A549 (cell line): ENCODE measurements at regions of chr19 and their contacts with region 1.

Region 1: GRCh38 chr19:9934132-9934950 is 2.0 kb downstream of the OLFM2 start:
- DNase-seq: peak; percentile 52 to 75
- ATAC-seq: peak; percentile 38 to 76
- H3K4me3 ChIP-seq: no peak overlapping the region
- H3K27ac ChIP-seq: no peak overlapping the region
- H3K4me1 ChIP-seq: peaks cover 17% of the 10 kb centered on the region
- CTCF ChIP-seq: peak; percentile 74
- EP300 ChIP-seq: no peak
- POLR2A ChIP-seq: no peak
- RAD21 ChIP-seq: peak; percentile 75 to 89

Region 2: DNA sequence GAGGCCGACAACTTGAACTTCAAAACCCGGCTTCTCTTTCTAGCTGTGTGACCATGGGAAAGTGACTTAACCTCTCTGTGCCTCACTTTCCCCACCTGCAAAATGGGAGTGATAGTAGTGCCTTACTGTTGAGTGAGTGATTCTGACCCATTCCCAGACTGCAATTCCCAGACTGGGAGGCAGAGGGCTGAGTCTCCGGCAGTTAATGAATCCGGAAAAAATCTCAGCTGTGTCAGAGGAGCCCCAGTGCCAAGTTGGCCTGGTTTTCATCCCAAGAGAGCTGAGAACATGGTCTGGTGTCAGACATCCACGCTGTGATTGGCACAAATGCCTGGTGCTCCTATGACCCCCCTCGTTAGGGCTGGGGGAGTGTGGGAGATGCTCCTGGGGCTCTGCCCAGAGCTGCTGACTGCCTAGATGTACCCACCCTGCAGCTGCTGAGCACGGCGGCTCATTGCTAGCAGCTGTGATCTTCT is 49.2 kb before region 1 on chr19:
- CTCF ChIA-PET with region 1: no interaction called
- POLR2A ChIA-PET with region 1: no interaction called
- DNase-seq: no peak
- ATAC-seq: peak in 1 of 2 experiments; percentile 64; a peak in 3 of 6 replicates
- H3K4me3 ChIP-seq: no peak overlapping the region
- H3K27ac ChIP-seq: no peak overlapping the region
- H3K4me1 ChIP-seq: no peaks in the 10 kb centered on the region
- CTCF ChIP-seq: no peak
- EP300 ChIP-seq: no peak
- POLR2A ChIP-seq: no peak
- RAD21 ChIP-seq: no peak

Region 3: DNA sequence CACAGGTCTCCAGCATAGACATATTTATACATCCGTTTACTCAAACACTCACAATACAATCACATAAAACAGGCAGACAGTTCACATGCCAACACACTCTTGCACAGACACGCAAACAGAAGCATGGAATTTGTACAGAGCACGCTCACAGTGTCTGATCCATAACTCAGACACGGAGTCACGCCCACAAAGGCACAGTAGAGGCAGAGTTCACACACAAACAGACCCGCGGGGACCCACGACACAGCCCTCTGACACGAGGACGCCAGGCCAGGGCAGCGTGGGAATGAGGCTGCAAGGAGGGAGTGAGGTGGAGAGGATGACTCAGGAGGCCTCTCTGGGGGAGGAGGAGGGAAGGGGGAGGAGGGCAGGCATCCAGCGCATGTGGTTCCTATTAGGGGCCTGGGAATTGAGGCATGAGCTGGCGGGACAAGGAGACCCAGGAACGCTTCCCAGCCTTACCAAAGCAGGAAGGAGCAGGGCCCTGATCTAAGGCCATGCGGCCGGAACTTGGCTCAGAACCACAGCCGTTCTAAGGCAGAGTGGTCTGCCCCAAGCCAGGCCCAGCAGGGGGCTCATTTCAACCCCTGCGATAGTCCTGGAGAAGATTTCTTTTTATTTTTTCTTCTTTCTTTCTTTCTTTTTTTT is 11.1 kb after region 1 on chr19:
- CTCF ChIA-PET with region 1: interaction called, 12 read pairs
- POLR2A ChIA-PET with region 1: no interaction called
- DNase-seq: peak in 1 of 2 experiments; percentile 37
- ATAC-seq: peak; percentile 70 to 87
- H3K4me3 ChIP-seq: no peak overlapping the region
- H3K27ac ChIP-seq: peak overlapping the region in 1 of 2 experiments; percentile 59; a peak in 2 of 6 replicates
- H3K4me1 ChIP-seq: peaks cover 7% of the 10 kb centered on the region; the same call in 2 of the 3 replicates
- CTCF ChIP-seq: no peak
- EP300 ChIP-seq: no peak
- POLR2A ChIP-seq: no peak
- RAD21 ChIP-seq: no peak

Region 4: DNA sequence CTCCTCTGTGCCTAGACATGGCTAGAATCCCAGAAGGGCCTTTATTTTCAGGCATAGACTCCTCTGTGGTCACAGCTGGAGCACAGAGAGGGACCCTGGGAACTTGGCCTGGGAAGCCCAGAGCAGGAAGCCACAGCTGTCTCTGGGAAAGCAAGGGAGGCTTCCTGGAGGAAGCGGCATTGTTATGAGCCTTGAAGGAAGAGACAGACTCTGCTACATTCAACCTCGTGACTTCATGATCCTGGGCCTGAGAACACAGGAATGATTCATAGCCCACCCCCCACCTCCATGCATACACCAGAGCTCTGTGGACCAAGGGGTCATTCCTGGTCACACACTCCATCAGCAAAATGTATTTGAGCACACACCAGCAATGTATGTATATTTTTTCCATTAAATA is 87.5 kb after region 1 on chr19:
- CTCF ChIA-PET with region 1: interaction called, 63 read pairs
- POLR2A ChIA-PET with region 1: no interaction called
- DNase-seq: no peak
- ATAC-seq: no peak
- H3K4me3 ChIP-seq: no peak overlapping the region
- H3K27ac ChIP-seq: no peak overlapping the region
- H3K4me1 ChIP-seq: peaks cover under 1% of the 10 kb centered on the region; the same call in 2 of the 3 replicates
- CTCF ChIP-seq: no peak
- EP300 ChIP-seq: no peak
- POLR2A ChIP-seq: no peak
- RAD21 ChIP-seq: no peak

Region 5: DNA sequence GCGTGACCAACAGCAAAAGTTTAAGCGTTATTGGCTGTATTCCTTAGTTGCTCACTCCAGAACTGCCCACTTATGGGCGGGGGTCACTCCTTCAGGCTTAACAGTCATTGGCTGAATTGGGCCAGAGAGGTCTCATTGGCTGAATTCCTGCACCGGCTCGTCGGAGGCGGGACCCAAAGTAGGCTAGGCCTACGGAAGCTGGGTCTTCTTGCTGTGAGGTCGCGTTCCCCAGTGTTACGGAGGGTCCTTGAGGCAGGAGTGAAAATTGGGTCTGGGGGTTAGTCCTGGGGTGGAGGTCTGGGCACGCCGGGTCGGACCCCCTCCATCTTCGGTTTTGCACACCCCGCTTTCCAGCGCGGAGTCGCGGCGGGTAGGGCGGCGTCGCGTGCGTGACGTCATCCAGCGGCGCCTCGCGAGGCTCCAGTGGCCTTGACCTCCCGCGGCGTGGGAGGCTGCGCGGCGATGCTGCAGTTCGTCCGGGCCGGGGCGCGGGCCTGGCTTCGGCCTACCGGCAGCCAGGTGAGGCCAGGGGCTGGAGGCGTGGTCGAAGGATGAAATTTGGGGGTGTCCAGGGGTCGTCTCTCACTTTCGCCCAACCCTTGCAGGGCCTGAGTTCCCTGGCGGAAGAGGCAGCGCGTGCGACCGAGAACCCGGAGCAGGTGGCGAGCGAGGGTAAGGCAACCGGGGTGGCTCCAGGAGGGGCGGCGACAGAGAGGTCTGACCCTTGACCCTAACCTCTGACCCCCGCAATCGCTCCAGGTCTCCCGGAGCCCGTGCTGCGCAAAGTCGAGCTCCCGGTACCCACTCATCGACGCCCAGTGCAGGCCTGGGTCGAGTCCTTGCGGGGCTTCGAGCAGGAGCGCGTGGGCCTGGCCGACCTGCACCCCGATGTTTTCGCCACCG is 317.7 kb after region 1 on chr19 and contains the start of gene MRPL4:
- CTCF ChIA-PET with region 1: interaction called, 18 read pairs
- POLR2A ChIA-PET with region 1: no interaction called
- DNase-seq: peak; percentile 91 to 97
- ATAC-seq: peak; percentile 96 to 97
- H3K4me3 ChIP-seq: peak within 1 kb of the TSS; percentile 86
- H3K27ac ChIP-seq: peak within 1 kb of the TSS; percentile 95 to 98
- H3K4me1 ChIP-seq: no peaks in the 10 kb centered on the region
- CTCF ChIP-seq: no peak
- EP300 ChIP-seq: no peak
- POLR2A ChIP-seq: peak; percentile 52
- RAD21 ChIP-seq: no peak
- polyA plus RNA-seq, gene MRPL4: 25.9 and 26.4 TPM in 2 replicates